ENCODE measurements at regions of chr11 and their contacts with region 1.

Region 1: DNA sequence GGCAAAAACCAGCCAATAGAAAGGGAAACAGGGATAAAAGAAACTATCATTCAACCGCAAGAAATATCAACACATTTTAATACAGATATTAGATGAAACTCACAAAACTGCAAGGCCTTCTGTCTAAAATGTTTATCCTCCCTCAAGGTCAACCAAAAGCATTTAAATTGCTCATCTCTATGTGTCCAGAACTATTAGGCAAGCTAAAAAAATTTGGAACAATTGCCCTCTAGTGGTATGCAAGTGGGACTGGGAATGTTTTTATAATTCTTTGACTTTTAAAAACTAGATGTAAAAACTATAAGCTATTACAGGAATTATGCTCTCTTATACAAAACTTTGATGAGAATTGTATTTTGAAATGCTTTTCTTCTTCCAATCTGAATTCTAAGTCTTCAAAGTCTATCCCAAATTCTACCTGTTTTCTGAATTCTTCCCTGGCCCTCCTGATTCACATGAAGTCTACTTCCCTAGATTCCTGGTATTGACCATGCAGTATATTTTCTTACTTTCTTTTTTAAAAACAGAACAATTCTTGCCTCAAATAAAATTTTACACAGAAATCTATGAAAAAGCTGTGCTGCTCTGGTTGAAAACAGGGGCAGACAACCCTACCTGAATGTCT is 4.9 kb downstream of the CWC15 start:
- DNase-seq: no peak
- H3K4me3 ChIP-seq: no peak overlapping the region
- H3K27ac ChIP-seq: no peak overlapping the region
- H3K4me1 ChIP-seq: peaks cover 6 to 15% of the 10 kb centered on the region in 2 donors
- H3K27me3 ChIP-seq: no peaks in the 10 kb centered on the region
- CTCF ChIP-seq: peak; percentile 51 to 73 (median 65)
- POLR2A ChIP-seq: no peak

Region 2: DNA sequence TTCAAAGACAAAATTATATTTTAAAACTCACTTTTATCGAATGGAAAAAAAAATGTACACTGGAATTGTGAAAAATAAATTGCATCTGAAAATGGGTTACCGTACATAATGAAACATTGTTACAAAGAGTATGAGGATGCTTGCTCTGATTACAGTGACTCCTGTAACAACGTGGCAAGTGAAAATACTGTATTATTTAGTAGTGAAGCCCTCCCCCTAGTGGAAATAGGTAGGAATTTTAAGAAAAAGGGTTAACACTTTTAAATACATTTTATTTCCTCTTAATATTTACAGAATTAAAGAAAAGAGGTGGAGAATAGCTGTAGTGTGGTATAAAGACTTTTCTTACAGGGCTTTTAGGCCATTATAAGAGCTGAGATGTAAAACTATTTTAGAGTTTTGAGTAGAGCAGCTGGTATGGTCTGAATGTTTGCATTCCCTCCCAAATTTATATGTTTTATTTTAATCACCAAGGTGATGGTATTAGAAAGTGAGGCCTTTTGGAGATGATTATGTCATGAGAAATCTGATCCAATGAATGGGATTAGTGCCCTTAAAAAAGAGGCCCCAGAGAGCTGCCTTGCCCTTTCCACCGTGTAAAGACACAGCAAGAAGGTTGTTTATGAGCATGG is 795.9 kb after region 1 on chr11:
- intact Hi-C with region 1: loop called in 1 of 2 experiments (anchors 10 kb)
- DNase-seq: no peak
- H3K4me3 ChIP-seq: no peak overlapping the region
- H3K27ac ChIP-seq: no peak overlapping the region
- H3K4me1 ChIP-seq: no peaks in the 10 kb centered on the region
- H3K27me3 ChIP-seq: no peaks in the 10 kb centered on the region
- CTCF ChIP-seq: peak; percentile 70 to 85 (median 76)
- POLR2A ChIP-seq: no peak